ENCODE measurements at regions of chr3 and their contacts with region 1.

Region 1: DNA sequence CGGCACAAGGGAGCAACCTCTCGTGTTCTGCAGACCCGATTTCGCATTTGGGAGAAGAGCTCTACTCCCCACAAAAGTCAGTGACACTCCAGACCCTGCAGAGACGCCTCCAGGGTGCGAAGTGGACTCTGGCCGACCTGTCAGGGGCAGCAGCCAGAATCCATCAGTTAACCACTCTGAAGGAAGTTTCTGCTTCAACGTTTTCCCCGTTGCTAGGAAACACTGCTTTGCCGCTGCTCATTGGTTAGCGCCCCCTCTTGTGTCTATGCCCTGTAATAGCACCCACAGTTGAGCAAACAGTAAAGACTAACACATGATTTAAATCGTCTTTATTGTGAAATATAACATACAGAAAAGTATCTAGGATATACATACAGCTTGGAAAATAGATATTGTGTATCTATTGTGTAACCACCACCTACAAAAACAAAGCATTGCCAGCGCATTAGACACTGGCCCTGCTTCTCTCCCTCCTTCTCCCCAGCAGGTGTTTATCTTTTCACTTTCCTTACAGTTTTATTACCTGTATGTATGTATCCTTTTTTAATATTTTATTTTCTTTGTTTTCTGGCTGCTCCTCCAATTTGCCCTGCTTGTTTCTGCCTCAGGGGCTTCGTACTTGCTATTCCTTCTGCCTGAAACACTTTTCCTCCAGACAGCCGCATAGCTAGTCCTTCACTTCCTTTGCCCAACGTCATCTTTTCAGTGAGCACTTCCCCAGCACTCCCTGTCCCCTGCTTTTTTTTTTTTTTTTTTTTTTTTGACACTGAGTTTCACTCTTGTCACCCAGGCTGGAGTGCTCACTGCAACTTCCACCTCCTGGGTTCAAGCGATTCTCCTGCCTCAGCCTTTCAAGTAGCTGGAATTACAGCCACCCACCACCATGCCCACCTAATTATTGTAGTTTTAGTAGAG is 38.8 kb downstream of the TMEM40 start:
- DNase-seq: peak; percentile 85

Region 2: GRCh38 chr3:12135029-12135657 is 585.1 kb before region 1 on chr3:
- intact Hi-C with region 1: loop called (anchors 10 kb)
- DNase-seq: peak; percentile 88

Region 3: DNA sequence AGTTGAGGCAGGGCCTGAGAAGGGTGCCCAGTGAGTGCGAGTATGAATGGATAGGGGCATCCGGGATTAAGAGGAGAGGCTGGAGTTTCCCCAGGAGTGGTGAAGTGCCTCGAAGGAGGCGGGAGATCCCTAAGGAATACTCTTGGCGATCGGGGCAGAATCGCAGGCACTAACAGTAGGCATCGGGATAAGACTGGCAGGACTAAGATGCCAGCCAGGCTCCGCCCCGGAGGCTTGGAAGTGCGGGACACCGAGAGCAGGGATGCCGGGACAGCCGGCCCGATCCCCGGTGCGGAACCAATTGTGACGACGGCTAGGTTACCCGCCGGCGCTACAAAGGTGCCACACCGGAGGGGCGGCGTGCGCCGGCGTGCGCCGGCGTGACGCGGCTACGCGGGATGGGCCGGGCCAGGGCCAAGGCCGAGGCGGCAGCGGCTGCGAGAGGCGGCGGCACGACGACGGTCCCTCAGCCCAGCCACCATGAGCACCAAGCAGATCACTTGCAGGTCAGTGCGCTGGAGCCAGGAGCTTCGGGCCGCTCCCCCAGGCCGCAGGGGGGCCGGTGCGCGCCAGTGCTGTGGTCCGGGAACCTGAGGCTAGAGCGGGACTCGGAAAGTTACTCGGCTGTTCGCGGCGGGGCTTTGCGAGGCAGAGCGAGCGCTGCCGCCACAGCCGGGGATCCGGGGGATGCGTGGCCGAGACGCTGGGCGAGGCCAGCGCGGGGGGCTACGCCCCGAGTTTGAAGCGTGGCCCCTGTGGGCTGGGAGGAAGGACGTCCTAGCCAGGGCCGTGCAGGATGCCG is 163.4 kb before region 1 on chr3 and contains the start of gene MKRN2:
- intact Hi-C with region 1: loop called (anchors 5 kb)
- DNase-seq: peak; percentile 94
- total RNA-seq, gene MKRN2: 27.9 TPM

Region 4: DNA sequence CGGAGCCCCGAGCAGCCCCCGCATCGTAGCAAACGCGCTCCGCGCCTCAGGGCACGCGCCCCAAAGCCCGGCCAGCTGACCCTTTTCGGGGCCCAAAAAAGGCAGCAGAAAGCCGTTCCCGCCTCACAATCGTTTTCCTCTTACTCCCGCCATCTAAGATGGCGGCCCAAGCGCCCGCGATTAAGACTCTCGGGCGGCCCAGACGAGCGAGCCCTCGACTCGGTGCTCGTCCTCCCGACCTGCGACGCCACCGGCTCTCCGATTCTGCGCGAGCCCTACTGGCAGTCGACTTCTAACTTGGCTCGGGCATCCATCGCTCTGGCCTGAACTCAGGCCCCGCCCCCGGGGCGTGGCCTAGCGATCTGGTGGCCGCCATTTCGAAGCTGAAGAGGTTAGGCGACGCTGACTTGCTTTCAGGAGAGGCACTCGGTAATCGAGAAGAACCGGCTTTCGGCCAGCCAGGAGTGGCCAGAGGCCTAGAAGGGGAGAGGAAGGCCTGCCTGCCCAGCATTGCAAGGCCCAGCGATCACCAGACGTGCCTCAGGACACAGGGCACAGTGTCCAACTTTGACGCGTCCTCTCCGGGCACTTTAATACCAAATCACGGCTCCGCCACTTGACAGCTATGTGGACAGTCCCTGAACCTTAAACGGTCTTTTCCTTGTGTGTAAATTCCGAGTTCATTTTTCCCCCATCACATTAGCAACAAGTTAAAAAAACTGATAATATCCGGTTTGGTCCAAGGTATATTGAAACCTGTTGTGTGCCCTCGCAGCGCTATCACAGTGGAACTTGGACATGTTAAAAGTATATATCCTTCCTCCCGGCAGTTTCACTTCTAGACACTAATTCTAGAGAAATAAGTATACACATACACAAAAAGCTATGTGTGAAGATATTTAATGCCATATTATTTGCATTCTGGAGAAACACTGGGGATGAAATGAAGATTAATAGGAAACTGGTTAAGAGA is 56.0 kb before region 1 on chr3 and contains the start of gene RAF1:
- intact Hi-C with region 1: no loop called
- DNase-seq: peak; percentile 99
- total RNA-seq, gene RAF1: 118 TPM

Region 5: DNA sequence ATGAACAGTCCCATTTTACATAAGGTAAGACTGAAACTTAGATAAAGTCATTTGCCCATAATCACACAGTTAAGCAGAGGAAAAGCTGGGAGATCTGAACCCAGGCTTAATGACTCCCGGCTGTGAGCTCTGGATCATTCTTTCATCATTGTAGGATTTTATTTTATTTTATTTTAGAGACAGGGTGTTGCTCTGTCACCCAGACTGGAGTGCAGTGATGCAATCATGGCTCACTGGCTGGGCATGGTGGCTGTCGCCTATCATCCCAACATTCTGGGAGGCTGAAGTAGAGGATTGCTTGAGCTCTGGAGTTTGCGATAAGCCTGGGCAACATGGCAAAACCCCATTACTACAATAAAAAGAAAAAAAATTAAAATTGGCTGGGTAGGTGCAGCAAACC is 25.1 kb before region 1 on chr3:
- intact Hi-C with region 1: no loop called
- DNase-seq: no peak

Measured in cardiac septum (tissue), 1 donor.